Endothelial cell of umbilical vein (primary cell): ENCODE measurements at regions of chr6 and their contacts with region 1.

Region 1: GRCh38 chr6:25913741-25914140 is 16.8 kb downstream of the SLC17A2 start:
- DNase-seq: no peak
- H3K4me3 ChIP-seq: no peak overlapping the region
- H3K27ac ChIP-seq: no peak overlapping the region
- H3K4me1 ChIP-seq: no peaks in the 10 kb centered on the region
- H3K27me3 ChIP-seq: peaks cover 0 to 2% of the 10 kb centered on the region in 2 experiments
- CTCF ChIP-seq: no peak
- POLR2A ChIP-seq: no peak

Region 2: DNA sequence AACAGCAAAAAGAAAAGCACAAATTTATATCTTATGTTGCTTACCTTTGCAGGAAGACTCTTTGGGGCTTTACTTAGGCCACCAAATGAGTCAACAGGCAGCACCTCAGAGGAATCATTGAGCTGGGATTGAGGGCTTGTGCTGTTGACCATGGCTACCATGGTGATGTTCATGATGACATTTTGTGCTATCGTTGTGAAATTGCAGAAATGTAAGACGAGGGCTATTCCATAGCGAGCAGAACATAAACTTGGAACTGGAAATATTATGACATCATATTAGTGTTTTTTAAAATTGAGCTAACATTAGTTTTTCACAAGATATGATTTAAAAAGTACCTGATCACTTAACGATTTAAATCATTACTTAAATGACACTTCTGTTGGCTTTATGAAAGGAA is 51.6 kb before region 1 on chr6:
- CTCF ChIA-PET with region 1: no interaction called
- POLR2A ChIA-PET with region 1: no interaction called
- dilution Hi-C with region 1: no loop called
- intact Hi-C with region 1: no loop called
- DNase-seq: no peak
- H3K4me3 ChIP-seq: no peak overlapping the region
- H3K27ac ChIP-seq: no peak overlapping the region
- H3K4me1 ChIP-seq: peaks cover 3% of the 10 kb centered on the region
- H3K27me3 ChIP-seq: peaks cover 2 to 11% of the 10 kb centered on the region in 2 experiments
- CTCF ChIP-seq: no peak
- POLR2A ChIP-seq: no peak

Region 3: DNA sequence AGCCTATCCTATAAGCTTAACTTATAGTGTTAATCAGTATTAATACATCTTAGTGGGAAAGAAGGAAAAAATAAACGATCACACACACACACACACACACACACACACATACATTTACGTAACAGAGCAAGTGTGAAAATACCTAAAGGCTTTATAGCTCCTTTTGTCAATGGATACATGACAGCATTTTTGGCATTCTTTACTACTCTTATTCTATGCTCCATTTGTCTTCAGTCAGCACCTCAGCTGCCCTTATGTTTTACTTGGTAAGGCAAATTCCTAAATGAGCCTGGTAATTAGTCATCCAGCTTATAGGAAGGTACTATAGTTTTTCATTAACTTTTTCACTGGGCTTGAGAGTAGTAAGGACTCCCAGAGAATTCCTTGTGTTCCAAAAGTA is 14.6 kb before region 1 on chr6:
- CTCF ChIA-PET with region 1: interaction called, 10 read pairs
- POLR2A ChIA-PET with region 1: no interaction called
- dilution Hi-C with region 1: no loop called
- intact Hi-C with region 1: no loop called
- DNase-seq: no peak
- H3K4me3 ChIP-seq: no peak overlapping the region
- H3K27ac ChIP-seq: no peak overlapping the region
- H3K4me1 ChIP-seq: no peaks in the 10 kb centered on the region
- H3K27me3 ChIP-seq: peaks cover 2% of the 10 kb centered on the region in 2 experiments
- CTCF ChIP-seq: no peak
- POLR2A ChIP-seq: no peak

Region 4: DNA sequence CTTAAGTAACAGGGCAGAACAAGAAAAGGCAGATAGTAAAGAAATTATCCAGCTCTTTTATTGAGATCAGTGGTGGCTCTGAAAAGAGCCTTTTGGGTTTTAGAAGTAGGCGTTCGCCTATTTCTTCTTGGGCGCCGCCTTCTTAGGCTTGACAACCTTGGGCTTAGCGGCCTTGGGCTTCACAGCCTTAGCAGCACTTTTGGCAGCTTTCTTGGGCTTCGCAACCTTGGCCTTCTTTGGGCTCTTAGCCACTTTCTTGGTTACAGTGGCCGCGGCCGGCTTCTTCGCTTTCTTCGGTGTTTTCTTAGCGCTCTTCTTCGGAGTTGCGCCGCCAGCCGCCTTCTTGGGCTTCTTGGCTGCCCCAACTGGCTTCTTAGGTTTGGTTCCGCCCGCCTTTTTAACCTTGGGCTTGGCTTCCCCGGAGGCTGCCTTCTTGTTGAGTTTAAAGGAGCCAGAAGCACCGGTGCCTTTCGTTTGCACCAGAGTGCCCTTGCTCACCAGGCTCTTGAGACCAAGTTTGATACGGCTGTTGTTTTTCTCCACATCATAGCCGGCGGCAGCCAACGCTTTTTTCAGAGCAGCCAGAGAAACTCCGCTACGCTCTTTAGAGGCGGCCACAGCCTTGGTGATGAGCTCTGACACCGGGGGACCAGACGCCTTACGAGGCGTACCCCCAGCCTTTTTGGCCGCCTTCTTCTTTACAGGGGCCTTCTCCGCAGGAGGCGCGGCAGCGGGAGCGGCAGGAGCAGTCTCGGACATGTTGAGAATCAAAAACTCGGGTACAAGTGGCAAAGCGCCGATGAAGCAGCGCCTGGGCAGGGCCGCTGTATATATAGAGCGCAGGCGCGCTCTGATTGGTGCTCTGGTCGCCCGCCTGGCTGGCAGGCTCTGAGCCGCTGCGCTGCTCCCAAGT is 142.2 kb after region 1 on chr6:
- CTCF ChIA-PET with region 1: no interaction called
- POLR2A ChIA-PET with region 1: no interaction called
- dilution Hi-C with region 1: no loop called
- intact Hi-C with region 1: no loop called
- DNase-seq: peak; percentile 93
- H3K4me3 ChIP-seq: peak overlapping the region; percentile 62 to 74 (median 65)
- H3K27ac ChIP-seq: peak overlapping the region; percentile 98
- H3K4me1 ChIP-seq: peaks cover 13% of the 10 kb centered on the region
- H3K27me3 ChIP-seq: peaks cover 1 to 2% of the 10 kb centered on the region in 2 experiments
- CTCF ChIP-seq: no peak
- POLR2A ChIP-seq: peak; percentile 88

Region 5: GRCh38 chr6:26285143-26286134 is 371.7 kb after region 1 on chr6:
- CTCF ChIA-PET with region 1: no interaction called
- POLR2A ChIA-PET with region 1: no interaction called
- dilution Hi-C with region 1: no loop called
- intact Hi-C with region 1: no loop called
- DNase-seq: peak; percentile 98
- H3K4me3 ChIP-seq: peak overlapping the region; percentile 5 to 68 (median 58)
- H3K27ac ChIP-seq: peak overlapping the region; percentile 68
- H3K4me1 ChIP-seq: no peaks in the 10 kb centered on the region
- H3K27me3 ChIP-seq: no peaks in the 10 kb centered on the region
- CTCF ChIP-seq: no peak
- POLR2A ChIP-seq: peak; percentile 99